ENCODE measurements at regions of chr2 and their contacts with region 1.

Region 1: DNA sequence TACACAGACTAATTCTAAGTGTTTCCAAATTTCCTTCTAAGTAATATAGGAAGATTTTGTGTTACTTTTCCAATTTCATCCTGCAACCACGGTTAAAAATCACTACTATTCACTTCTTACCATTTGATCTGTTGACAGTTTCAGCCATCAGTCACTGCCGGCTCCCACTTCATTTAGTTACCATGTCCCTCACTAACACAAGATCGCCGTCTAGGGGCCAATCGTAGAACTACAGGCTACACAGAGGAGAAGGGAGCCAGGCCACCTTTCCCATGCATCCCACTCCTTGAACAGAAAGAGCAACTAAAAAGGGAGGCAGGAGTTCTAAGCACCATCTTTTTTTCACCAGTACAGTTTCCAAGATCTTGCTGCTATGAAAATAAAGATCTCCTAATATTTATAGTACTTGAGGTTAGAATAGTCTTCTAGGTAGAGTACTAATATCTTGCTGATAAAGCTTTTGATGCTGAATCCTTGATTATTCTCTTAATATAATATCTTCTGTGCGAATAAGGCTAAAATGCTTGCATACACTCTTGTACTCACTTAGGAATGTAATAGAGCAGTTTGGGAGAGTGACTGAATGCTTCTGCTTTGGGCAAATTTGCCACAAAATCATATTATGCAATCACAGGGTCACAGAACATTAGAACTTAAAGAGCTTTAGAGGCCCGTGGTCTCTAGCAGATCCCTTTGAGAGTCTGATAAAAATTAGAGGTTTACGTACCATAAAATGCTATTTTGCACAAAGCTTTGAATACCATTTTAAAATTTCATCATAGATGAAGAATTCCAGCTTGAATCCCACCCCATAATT is 39.5 kb upstream of the CYP1B1 start:
- DNase-seq: peak; percentile 47
- H3K4me3 Mint-ChIP-seq: no peak overlapping the region
- H3K27ac Mint-ChIP-seq: no peak overlapping the region
- H3K4me1 Mint-ChIP-seq: no peaks in the 10 kb centered on the region
- H3K27me3 Mint-ChIP-seq: peaks cover 3% of the 10 kb centered on the region

Region 2: DNA sequence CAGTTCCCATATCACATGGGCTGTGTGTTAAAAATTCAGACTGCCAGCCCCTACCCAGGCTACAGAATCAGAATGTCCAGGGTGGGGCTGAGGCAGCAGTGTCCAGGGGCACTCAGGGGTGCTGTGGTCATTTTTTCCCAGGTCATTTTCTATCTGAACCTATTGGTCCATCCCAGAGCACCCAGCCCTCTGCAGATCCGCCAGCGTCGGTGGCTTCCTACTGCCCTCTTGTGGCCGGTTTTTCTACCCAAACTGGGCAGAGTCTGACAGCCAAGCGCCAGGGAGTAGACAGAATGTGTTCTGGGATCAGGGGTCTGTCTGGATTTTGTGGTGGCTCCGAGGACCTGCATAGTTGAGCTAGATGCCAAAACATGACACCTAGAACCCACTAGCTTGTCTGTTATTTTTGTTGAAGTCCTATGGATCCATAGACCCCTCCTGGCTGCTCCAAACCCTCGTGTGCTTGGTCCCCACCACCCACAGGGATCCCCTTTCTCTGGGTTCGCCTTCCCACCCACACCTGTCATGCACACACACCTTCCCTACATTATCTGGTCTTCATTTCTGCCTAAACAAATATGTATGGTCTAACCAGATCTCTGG is 224.4 kb before region 1 on chr2:
- intact Hi-C with region 1: loop called (anchors 5 kb)
- DNase-seq: peak; percentile 35
- H3K4me3 Mint-ChIP-seq: no peak overlapping the region
- H3K27ac Mint-ChIP-seq: no peak overlapping the region
- H3K4me1 Mint-ChIP-seq: peaks cover 8% of the 10 kb centered on the region
- H3K27me3 Mint-ChIP-seq: peaks cover 13% of the 10 kb centered on the region

Region 3: GRCh38 chr2:37982147-37982582 is 133.3 kb before region 1 on chr2:
- intact Hi-C with region 1: loop called (anchors 1 kb)
- DNase-seq: peak; percentile 16
- H3K4me3 Mint-ChIP-seq: no peak overlapping the region
- H3K27ac Mint-ChIP-seq: no peak overlapping the region
- H3K4me1 Mint-ChIP-seq: peaks cover 14% of the 10 kb centered on the region
- H3K27me3 Mint-ChIP-seq: peaks cover 9% of the 10 kb centered on the region

Region 4: GRCh38 chr2:38095996-38096861 is 19.2 kb before region 1 on chr2:
- intact Hi-C with region 1: loop called (anchors 2 kb)
- DNase-seq: no peak
- H3K4me3 Mint-ChIP-seq: no peak overlapping the region
- H3K27ac Mint-ChIP-seq: peak overlapping the region; percentile 29
- H3K4me1 Mint-ChIP-seq: peaks cover 63% of the 10 kb centered on the region
- H3K27me3 Mint-ChIP-seq: peaks cover 41% of the 10 kb centered on the region

Region 5: DNA sequence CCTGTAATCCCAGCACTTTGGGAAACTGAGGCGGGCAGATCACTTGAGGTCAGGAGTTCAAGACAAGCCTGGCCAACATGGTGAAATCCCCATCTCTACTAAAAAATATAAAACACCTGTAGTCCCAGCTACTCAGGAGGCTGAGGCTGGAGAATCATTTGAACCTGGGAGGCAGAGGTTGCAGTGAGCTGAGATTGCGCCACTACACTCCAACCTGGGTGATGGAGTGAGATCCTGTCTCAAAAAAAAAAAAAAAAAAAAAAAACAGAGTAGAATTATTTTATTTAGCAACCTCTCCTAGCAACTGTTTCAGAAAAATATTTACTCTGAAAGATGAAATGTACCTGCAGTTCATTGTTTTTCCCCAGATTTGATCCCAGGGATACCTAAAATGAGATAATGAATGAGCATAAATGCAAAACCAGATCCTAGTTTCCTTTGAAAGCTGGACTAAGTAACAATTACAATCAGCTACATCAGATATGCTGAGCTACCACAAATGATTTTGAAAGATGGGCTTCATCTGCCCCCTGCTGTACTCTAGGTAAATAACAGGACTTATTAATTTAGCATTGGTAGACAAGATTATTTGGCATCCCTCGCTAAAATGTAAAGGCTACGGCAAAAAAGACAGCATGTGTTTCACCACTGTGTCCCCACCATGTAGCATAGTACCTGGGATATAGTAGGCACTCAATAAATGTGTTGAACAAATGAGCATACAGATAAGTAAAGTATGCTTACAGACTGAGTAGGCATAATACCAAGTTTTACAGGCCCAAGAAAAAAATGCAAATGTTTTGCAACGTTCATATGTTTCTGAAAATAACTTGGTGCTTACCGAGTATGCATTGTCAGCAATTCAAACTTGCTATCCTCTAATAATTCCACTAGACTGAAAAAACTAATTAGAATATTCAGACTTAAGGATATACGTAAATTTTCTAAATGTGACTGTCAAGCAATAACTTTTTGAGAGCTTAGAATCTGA is 159.2 kb after region 1 on chr2:
- intact Hi-C with region 1: loop called (anchors 1 kb)
- DNase-seq: no peak
- H3K4me3 Mint-ChIP-seq: no peak overlapping the region
- H3K27ac Mint-ChIP-seq: no peak overlapping the region
- H3K4me1 Mint-ChIP-seq: peaks cover 12% of the 10 kb centered on the region
- H3K27me3 Mint-ChIP-seq: peaks cover 4% of the 10 kb centered on the region

Region 6: DNA sequence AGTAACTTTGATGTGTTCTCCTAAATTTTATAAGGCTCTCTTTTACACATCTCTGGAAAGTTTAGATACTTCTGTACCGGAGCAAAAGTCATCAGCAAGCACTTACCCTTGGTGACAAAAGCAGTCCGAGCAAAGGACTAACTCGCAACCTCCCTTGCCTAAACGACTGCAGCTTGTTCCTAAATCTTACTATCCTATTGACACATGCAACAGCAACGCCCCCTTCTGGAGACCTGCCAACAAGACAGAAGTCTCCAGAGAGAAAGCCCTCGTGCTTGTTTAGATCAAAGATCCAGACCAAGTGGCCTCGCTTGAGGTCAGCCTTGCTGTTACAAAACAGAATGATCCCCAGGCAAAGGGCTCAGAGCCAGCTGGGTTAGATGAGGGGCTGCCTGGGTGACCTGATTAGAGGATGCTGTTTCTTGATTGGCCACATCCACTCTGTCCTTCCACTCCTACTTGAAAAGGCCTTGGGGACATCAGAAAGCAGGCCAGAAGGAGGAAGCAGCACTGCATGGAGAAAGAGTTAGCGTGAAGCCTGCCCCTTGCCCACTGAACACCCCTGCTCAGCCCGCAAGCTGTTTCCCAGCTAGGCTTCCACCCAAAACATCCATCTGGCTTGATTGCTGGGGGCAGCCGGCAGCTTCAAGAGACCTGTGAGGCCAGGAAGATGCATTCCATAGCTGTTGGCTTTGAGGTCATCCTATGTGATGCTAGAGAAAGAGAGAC is 393.1 kb after region 1 on chr2:
- intact Hi-C with region 1: loop called (anchors 1 kb)
- DNase-seq: peak; percentile 67
- H3K4me3 Mint-ChIP-seq: no peak overlapping the region
- H3K27ac Mint-ChIP-seq: no peak overlapping the region
- H3K4me1 Mint-ChIP-seq: peaks cover 19% of the 10 kb centered on the region
- H3K27me3 Mint-ChIP-seq: peaks cover 2% of the 10 kb centered on the region